Breast epithelium (tissue), 4 donors: ENCODE measurements at regions of chr7 and their contacts with region 1.

Region 1: DNA sequence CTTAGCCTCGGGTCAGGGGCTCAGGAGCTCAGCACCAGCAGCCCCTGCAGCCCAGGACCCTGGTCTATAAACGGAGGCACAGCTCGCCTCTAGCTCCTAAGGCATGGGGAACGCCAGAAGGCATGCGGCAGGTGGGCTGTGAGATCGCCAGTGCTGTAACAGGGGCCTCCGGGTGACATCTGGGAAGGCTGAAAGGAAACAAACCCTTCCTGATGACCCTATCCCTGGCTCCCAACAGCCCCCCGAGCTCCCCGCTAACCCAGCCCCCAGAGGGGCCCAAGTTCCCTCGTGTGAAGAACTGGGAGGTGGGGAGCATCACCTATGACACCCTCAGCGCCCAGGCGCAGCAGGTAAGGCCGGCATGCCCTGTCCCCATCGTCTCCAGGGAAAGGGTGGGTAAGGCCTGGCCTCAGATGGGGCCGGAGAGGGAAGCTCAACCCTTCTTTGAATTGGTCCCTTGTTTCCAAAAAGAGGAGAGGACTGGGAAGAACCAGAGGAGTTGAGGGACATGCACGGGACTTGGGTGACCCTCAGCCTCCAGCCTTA is 4.2 kb downstream of the NOS3 start:
- DNase-seq: no peak
- H3K4me3 ChIP-seq: peak overlapping the region; percentile 19 to 54 (median 30)
- H3K27ac ChIP-seq: no peak overlapping the region
- H3K4me1 ChIP-seq: no peaks in the 10 kb centered on the region
- H3K27me3 ChIP-seq: peaks cover 0 to 12% of the 10 kb centered on the region in 2 donors
- CTCF ChIP-seq: no peak
- POLR2A ChIP-seq: no peak

Region 2: DNA sequence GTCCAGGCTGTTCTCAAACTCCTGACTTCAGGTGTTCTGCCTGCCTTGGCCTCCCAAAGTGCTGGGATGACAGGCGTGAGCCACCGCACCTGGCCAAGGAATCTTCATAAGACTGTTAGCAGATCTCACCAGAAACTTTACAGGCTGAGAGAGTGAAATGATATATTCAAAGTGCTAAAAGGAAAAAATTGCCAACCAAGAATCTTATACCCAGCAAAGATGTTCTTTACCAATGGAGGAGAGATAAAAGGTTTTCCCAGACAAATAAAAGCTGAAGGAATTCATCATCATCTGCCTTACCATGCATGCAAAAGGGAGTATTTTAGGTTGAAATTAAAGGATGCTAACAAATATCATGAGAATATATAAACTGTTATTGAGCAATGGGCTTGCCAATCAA is 456.8 kb before region 1 on chr7:
- intact Hi-C with region 1: no loop called
- DNase-seq: no peak
- H3K4me3 ChIP-seq: no peak overlapping the region
- H3K27ac ChIP-seq: no peak overlapping the region
- H3K4me1 ChIP-seq: no peaks in the 10 kb centered on the region
- H3K27me3 ChIP-seq: no peaks in the 10 kb centered on the region
- CTCF ChIP-seq: no peak
- POLR2A ChIP-seq: no peak

Region 3: DNA sequence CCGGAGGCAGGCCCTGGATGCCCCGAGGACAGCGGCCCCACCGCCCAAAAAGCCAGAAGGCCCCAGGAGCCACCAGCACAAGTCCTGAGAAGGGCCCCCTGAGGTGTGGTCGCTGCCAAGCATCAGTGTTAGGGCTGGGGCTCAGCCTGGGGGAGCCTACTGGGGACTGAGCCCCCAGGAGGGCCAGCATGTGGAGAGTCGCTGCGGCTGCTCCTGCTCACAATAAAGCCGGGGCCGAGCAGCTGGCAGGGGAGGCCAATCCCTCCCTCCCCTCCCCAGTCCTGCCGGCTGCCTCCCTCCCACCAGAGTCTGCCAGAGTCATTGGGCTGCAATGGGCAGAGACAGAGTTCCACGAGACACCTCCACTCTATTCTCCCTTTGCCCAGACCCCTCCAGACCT is 50.2 kb after region 1 on chr7:
- intact Hi-C with region 1: loop called (anchors 1 kb)
- DNase-seq: no peak
- H3K4me3 ChIP-seq: no peak overlapping the region
- H3K27ac ChIP-seq: no peak overlapping the region
- H3K4me1 ChIP-seq: peaks cover 0 to 6% of the 10 kb centered on the region in 2 donors
- H3K27me3 ChIP-seq: no peaks in the 10 kb centered on the region
- CTCF ChIP-seq: no peak
- POLR2A ChIP-seq: no peak

Region 4: DNA sequence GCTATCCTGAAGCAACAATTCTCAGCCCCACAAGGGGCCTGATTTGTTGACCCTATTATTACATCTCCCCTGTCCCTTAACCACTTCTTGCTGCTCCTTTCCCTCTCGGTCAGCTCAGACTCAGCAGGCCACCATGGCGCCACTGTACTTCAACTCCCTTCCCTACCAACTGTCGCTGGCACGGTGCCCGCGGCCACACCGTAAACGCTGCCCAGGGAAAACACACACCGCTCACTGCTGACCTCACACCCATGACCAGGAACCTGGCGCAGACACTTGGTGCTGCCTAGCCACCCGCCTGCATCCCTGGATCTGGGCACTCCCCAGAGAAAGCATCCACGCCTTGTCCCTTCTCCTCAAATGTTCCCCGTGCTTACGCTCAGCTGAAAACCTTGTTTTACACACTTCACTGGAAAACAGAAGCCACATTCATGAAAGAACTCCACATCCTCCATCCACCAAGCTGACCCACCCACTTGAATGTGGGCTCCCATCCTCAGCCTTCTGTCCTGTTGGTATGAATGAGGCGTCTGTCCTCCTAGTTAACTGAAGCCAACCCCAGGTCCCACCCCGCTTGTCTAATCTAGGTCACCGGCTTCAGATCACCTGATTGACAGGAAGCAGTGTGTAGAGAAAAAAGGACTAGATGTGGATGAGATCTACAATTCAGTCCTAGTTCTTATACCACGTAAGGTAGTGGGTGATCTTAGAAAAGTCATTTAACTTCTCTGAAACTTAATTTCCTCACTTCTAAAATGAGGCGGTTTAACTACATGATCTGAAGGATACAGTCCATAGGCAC is 473.4 kb after region 1 on chr7:
- intact Hi-C with region 1: no loop called
- DNase-seq: no peak
- H3K4me3 ChIP-seq: no peak overlapping the region
- H3K27ac ChIP-seq: no peak overlapping the region
- H3K4me1 ChIP-seq: no peaks in the 10 kb centered on the region
- H3K27me3 ChIP-seq: no peaks in the 10 kb centered on the region
- CTCF ChIP-seq: no peak
- POLR2A ChIP-seq: no peak